Left lung (tissue), 14 donors: ENCODE measurements at regions of chr2 and their contacts with region 1.

Region 1: GRCh38 chr2:169824373-169825333 is at the start of gene METTL5:
- DNase-seq: peak; percentile 82 to 97 (median 86)
- ATAC-seq: peak; percentile 86
- H3K4me3 ChIP-seq: peak within 1 kb of the TSS; percentile 73 to 77
- H3K27ac ChIP-seq: peak within 1 kb of the TSS; percentile 74 to 82
- H3K4me1 ChIP-seq: peaks cover 8 to 38% of the 10 kb centered on the region in 2 donors
- H3K27me3 ChIP-seq: no peaks in the 10 kb centered on the region
- CTCF ChIP-seq: peak; percentile 87 to 98
- polyA plus RNA-seq, gene METTL5: 40.5 to 49.7 (median 44.0) TPM

Region 2: GRCh38 chr2:169705927-169706326 is 118.7 kb before region 1 on chr2:
- intact Hi-C with region 1: no loop called
- DNase-seq: no peak
- ATAC-seq: peak; percentile 42
- H3K4me3 ChIP-seq: no peak overlapping the region
- H3K27ac ChIP-seq: no peak overlapping the region
- H3K4me1 ChIP-seq: peaks cover 0 to 4% of the 10 kb centered on the region in 2 donors
- H3K27me3 ChIP-seq: no peaks in the 10 kb centered on the region
- CTCF ChIP-seq: no peak

Region 3: GRCh38 chr2:169928463-169928864 is 103.8 kb after region 1 on chr2:
- intact Hi-C with region 1: loop called in 1 of 2 experiments (anchors 5 kb)
- DNase-seq: peak in 2 of 4 donors; percentile 20 to 40
- ATAC-seq: peak; percentile 73
- H3K4me3 ChIP-seq: no peak overlapping the region
- H3K27ac ChIP-seq: no peak overlapping the region
- H3K4me1 ChIP-seq: no peaks in the 10 kb centered on the region
- H3K27me3 ChIP-seq: no peaks in the 10 kb centered on the region
- CTCF ChIP-seq: peak; percentile 59 to 68